Caco-2 (cell line): ENCODE measurements at regions of chrX and their contacts with region 1.

Region 1: DNA sequence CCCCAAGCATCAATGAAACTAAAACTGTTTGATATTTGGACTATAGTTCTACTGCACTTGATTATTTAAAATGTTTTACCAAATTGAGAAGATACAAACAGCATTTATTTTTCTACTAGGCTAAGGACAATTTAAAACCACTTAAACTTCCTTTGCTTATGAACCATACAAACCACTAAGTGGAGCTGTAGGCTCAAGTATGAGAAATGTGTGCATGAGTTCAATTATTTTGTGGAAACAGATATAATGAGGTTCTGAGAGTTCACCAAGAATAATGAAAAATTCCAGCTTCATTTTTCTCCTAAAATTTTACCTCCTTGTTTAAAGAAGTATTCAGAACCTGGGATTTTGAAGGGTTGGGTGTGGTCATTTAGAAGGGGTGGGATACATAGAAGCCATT is 63.1 kb downstream of the SERPINA7 start:
- DNase-seq: no peak
- H3K4me3 ChIP-seq: no peak overlapping the region
- H3K4me3 Mint-ChIP-seq: no peak overlapping the region
- H3K27ac Mint-ChIP-seq: no peak overlapping the region
- H3K4me1 ChIP-seq: no peaks in the 10 kb centered on the region
- H3K4me1 Mint-ChIP-seq: no peaks in the 10 kb centered on the region
- H3K27me3 ChIP-seq: no peaks in the 10 kb centered on the region
- H3K27me3 Mint-ChIP-seq: no peaks in the 10 kb centered on the region
- CTCF ChIP-seq: peak in 1 of 2 experiments; percentile 0

Region 2: GRCh38 chrX:106039920-106040319 is 64.5 kb after region 1 on chrX:
- CTCF ChIA-PET with region 1: interaction called, 3 read pairs
- POLR2A ChIA-PET with region 1: no interaction called
- intact Hi-C with region 1: loop called (anchors 1 kb)
- DNase-seq: peak in 1 of 2 experiments; percentile 3
- H3K4me3 ChIP-seq: no peak overlapping the region
- H3K4me3 Mint-ChIP-seq: no peak overlapping the region
- H3K27ac Mint-ChIP-seq: no peak overlapping the region
- H3K4me1 ChIP-seq: no peaks in the 10 kb centered on the region
- H3K4me1 Mint-ChIP-seq: peaks cover 9% of the 10 kb centered on the region
- H3K27me3 ChIP-seq: no peaks in the 10 kb centered on the region
- H3K27me3 Mint-ChIP-seq: peaks cover 3% of the 10 kb centered on the region
- CTCF ChIP-seq: peak in 1 of 2 experiments; percentile 45